Naive thymus-derived CD4-positive, alpha-beta T cell (primary cell): ENCODE measurements at regions of chr7 and their contacts with region 1.

Region 1: DNA sequence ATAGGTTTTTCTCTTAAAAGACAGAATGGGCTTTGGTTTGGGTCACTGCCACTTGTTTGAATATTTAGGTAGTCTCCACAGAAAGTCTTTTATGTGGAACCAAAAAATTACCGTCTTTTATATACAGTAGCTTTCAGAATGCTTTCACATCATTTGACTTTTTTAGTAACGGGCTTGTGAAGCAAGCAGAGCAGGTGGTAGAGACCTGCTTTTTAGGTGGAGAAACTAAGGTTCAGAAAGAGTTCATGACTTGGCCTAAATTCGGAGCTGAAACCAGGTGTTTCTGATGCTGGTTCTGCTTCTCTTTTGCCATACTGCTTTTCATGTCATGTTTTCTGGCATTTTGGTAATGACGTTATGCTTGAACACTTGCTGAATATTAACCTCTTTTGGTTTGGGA is 36.3 kb downstream of the GARS1 start:
- DNase-seq: no peak
- ATAC-seq: no peak
- H3K4me3 ChIP-seq: no peak overlapping the region
- H3K4me3 Mint-ChIP-seq: no peak overlapping the region
- H3K27ac ChIP-seq: no peak overlapping the region
- H3K27ac Mint-ChIP-seq: no peak overlapping the region
- H3K4me1 ChIP-seq: peaks cover 0 to 3% of the 10 kb centered on the region in 2 donors
- H3K4me1 Mint-ChIP-seq: peaks cover 0 to 15% (median 0%) of the 10 kb centered on the region in 7 donors
- H3K27me3 ChIP-seq: no peaks in the 10 kb centered on the region
- H3K27me3 Mint-ChIP-seq: no peaks in the 10 kb centered on the region

Region 2: DNA sequence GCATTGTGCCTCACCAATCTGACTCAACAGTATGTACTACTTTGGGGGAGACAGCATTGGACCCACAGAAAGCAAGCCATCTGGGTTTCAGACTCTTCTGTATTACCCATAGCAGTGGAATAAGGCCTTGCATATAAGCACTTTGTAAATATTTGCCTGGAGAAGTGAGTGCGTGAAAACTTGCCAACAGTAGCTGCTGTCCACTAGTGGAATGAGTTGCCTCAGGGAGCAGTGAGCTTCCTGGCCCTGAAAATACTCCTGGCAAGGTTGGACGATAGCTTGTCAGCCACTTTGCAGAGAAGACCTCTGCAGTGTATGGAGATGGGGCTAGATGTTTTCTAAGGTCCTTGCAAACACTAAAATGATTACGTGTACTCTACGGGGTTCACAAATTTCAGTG is 14.7 kb before region 1 on chr7:
- CTCF ChIA-PET with region 1: no interaction called
- POLR2A ChIA-PET with region 1: no interaction called
- intact Hi-C with region 1: loop called (anchors 2 kb)
- DNase-seq: no peak
- ATAC-seq: no peak
- H3K4me3 ChIP-seq: no peak overlapping the region
- H3K4me3 Mint-ChIP-seq: no peak overlapping the region
- H3K27ac ChIP-seq: no peak overlapping the region
- H3K27ac Mint-ChIP-seq: no peak overlapping the region
- H3K4me1 ChIP-seq: no peaks in the 10 kb centered on the region
- H3K4me1 Mint-ChIP-seq: peaks cover 0 to 29% (median 6%) of the 10 kb centered on the region in 7 donors
- H3K27me3 ChIP-seq: no peaks in the 10 kb centered on the region
- H3K27me3 Mint-ChIP-seq: no peaks in the 10 kb centered on the region